Endothelial cell of umbilical vein (primary cell): ENCODE measurements at regions of chr7 and their contacts with region 1.

Region 1: GRCh38 chr7:74083117-74083876 is at the start of gene LIMK1:
- DNase-seq: peak; percentile 74
- H3K4me3 ChIP-seq: peak within 1 kb of the TSS; percentile 67 to 84 (median 80)
- H3K27ac ChIP-seq: peak within 1 kb of the TSS; percentile 83
- H3K4me1 ChIP-seq: peaks cover 17% of the 10 kb centered on the region
- H3K27me3 ChIP-seq: no peaks in the 10 kb centered on the region
- CTCF ChIP-seq: no peak
- POLR2A ChIP-seq: peak; percentile 62
- total RNA-seq, gene LIMK1: 54.4 and 54.5 TPM in 2 replicates

Region 2: DNA sequence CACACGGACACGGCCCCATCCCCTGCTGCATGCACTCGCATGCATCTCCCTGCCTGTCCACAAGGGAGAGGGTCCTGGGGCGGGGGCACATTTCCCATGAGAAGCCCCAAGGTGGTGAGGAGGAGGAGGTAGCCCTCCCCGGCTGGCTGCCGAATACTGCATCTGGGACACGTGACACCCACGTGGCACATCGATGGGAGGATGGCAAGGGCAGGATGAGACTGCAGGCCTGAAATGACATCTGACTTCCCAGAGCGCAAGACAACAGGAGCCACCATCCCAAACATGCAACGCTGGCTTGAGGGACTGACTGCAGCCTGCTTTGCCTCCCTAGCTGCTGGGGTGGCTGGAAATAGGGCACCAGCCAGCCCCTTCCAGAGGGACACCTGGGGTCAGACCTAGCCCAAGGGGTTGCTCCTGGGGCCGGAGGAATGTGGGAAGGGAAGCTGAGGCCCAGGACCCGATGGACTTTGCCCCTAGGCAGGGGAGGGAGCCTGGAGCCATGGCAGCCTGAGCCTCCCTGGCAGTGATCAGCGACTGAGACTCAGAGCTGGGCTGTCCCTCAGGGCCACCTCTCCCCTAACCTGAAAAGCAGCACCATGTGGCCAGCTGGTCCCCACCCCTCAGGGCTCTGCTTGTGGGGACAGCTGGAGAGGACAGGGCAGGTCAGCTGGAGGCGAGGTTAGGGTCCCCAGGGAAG is 383.8 kb before region 1 on chr7:
- CTCF ChIA-PET with region 1: no interaction called
- POLR2A ChIA-PET with region 1: no interaction called
- dilution Hi-C with region 1: no loop called
- intact Hi-C with region 1: no loop called
- DNase-seq: no peak
- H3K4me3 ChIP-seq: no peak overlapping the region
- H3K27ac ChIP-seq: no peak overlapping the region
- H3K4me1 ChIP-seq: no peaks in the 10 kb centered on the region
- H3K27me3 ChIP-seq: no peaks in the 10 kb centered on the region
- CTCF ChIP-seq: no peak
- POLR2A ChIP-seq: no peak

Region 3: DNA sequence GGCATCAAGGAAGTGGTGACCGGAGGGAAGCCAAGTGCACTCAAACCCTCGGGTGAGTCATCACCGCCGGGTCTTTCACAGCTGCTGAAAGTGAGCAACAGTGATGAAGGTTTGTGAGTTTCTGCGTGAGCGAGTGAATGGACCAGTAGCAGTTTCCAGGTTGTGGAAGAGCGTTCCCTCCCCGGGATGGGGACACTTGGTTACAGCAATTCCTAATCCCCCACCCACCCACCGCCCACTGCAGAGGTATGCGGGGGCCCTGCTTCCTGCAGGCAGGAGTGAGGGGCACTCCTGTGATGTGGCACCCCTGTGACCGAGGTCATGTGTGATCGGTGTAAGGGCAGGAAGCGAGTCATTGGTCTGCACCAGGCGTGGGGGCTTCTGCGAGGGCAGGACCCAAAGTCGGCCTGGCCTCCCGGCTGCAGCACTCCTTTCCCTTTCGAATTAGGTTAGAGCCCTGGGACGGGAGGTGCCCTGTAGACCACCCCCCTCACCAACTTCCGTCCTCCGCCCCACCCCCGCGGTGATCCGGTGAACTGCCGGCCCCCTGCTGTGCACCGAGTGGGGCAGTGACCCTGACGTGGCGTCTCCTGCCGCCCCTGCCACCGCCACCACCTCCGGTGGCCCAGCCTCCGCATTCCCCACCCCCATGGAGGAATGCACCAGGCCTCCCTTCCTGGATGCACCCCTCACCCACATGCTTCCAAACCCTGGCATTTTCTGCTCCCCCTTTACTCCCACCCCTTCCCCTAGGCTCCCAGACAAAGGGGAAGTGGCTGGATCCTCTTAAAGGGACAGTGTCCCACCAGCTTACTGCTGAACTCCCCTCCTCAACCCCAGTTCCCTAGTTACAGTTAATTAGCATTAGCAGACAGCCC is 11.2 kb after region 1 on chr7:
- CTCF ChIA-PET with region 1: interaction called, 4 read pairs
- POLR2A ChIA-PET with region 1: interaction called, 6 read pairs
- dilution Hi-C with region 1: no loop called
- intact Hi-C with region 1: loop called (anchors 1 kb)
- DNase-seq: peak; percentile 89
- H3K4me3 ChIP-seq: peak overlapping the region in 2 of 3 experiments; percentile 0 to 29
- H3K27ac ChIP-seq: peak overlapping the region; percentile 83
- H3K4me1 ChIP-seq: peaks cover 34% of the 10 kb centered on the region
- H3K27me3 ChIP-seq: no peaks in the 10 kb centered on the region
- CTCF ChIP-seq: no peak
- POLR2A ChIP-seq: peak; percentile 21

Region 4: GRCh38 chr7:74173866-74174605 is 90.7 kb after region 1 on chr7 and contains the start of gene EIF4H:
- CTCF ChIA-PET with region 1: interaction called, 6 read pairs
- POLR2A ChIA-PET with region 1: no interaction called
- dilution Hi-C with region 1: no loop called
- intact Hi-C with region 1: loop called (anchors 5 kb)
- DNase-seq: peak; percentile 96
- H3K4me3 ChIP-seq: peak within 1 kb of the TSS; percentile 72 to 98 (median 95)
- H3K27ac ChIP-seq: peak within 1 kb of the TSS; percentile 84
- H3K4me1 ChIP-seq: peaks cover 33% of the 10 kb centered on the region
- H3K27me3 ChIP-seq: no peaks in the 10 kb centered on the region
- CTCF ChIP-seq: no peak
- POLR2A ChIP-seq: peak; percentile 92
- total RNA-seq, gene EIF4H: 415 and 434 TPM in 2 replicates

Region 5: DNA sequence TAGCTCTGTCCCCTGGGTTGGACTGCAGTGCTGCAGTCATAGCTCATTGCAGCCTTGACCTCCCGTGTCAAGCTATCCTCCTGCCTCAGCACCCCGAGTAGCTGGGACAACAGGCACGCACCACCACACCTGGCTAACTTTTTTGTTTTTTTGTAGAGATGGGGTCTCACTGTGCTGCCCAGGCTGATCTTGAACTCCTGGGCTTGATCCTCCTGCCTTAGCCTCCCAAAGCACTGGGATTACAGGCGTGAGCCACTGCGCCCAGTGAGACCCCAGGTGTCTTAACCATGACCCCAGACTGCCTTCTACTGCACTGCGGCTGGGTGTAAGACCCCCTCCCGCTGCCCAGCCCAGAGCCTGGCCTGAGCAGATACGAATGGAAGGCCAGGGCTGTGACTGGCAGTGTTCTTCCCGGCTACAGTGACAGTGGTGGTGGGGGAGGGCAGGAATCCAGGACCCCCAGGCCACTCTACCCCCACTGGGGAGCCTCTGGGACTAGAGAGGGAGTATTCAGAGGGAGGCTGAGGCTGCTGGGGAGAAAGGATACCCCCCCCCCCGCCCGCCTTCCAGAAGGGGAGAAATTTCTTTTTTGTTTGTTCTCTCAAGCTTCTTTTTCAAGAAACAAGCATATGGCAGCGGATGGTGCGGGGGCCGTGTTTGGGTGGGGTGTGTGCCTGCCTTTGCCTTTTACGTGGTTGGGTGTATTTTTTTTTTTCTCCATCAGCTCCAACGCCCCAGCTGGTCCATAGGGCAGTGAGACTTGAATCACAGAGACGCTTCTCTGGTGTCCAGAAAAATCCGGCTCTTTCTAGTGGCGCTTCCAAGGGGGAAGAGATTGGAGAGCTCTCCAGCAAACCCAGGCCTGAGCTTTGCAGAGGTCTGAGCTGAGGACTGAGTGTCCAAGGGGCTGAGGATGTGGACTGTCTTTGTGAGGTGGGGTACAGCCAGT is 407.0 kb after region 1 on chr7:
- CTCF ChIA-PET with region 1: no interaction called
- POLR2A ChIA-PET with region 1: interaction called, 10 read pairs
- dilution Hi-C with region 1: no loop called
- intact Hi-C with region 1: no loop called
- DNase-seq: no peak
- H3K4me3 ChIP-seq: no peak overlapping the region
- H3K27ac ChIP-seq: no peak overlapping the region
- H3K4me1 ChIP-seq: no peaks in the 10 kb centered on the region
- H3K27me3 ChIP-seq: no peaks in the 10 kb centered on the region
- CTCF ChIP-seq: no peak
- POLR2A ChIP-seq: no peak